Thyroid gland (tissue), 4 donors: ENCODE measurements at regions of chr9 and their contacts with region 1.

Region 1: GRCh38 chr9:71806901-71807307 is 38.6 kb upstream of the CEMIP2 start:
- DNase-seq: peak; percentile 70 to 73
- H3K4me3 ChIP-seq: no peak overlapping the region
- H3K27ac ChIP-seq: no peak overlapping the region
- H3K4me1 ChIP-seq: no peaks in the 10 kb centered on the region
- H3K27me3 ChIP-seq: no peaks in the 10 kb centered on the region
- CTCF ChIP-seq: peak; percentile 25 to 88 (median 84)
- POLR2A ChIP-seq: no peak

Region 2: GRCh38 chr9:72025931-72026342 is 219.0 kb after region 1 on chr9:
- intact Hi-C with region 1: loop called (anchors 5 kb)
- DNase-seq: no peak
- H3K4me3 ChIP-seq: no peak overlapping the region
- H3K27ac ChIP-seq: no peak overlapping the region
- H3K4me1 ChIP-seq: no peaks in the 10 kb centered on the region
- H3K27me3 ChIP-seq: no peaks in the 10 kb centered on the region
- CTCF ChIP-seq: no peak
- POLR2A ChIP-seq: no peak